A673 (cell line): ENCODE measurements at regions of chr7 and their contacts with region 1.

Region 1: DNA sequence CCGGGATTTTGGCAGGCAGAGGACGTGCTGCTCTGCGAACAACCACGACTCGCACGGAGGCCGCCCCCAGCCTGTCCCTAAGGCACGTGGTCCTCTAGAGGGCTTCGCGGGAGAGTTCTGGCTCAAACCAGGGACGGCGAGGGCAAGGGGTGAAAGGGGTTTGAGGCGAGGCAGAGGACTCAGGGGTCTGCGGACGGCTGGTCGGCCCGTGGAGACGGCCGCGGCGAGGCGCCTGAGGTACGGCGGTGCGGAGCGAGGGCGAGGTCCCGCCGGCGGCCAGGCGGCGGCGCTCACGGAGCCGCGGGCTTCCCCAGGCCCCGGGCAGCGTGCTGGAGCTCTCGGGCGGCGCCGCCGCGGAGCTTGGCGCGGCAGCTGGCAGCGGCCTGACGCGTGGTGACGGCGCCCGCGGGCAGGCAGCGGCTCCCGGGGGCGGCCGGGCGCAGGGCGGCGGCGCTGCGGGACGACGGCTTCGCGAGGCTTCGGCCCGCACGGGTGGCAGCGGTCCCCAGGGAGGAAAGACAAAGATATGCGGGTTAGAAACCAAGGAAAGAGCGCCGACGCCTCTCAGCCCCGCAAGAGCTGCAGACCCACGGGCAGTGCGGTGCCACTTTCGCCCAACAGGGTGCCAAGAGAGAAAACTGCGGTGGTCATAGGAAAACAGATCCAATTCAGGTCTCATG is 44.8 kb downstream of the ZNF800 start:
- DNase-seq: peak; percentile 86
- H3K4me3 ChIP-seq: peak overlapping the region; percentile 37
- H3K27ac ChIP-seq: no peak overlapping the region
- H3K4me1 ChIP-seq: no peaks in the 10 kb centered on the region
- H3K27me3 ChIP-seq: no peaks in the 10 kb centered on the region
- CTCF ChIP-seq: no peak; the same call in none of the 2 replicates

Region 2: GRCh38 chr7:126993626-126994213 is 354.0 kb before region 1 on chr7:
- CTCF ChIA-PET with region 1: no interaction called
- POLR2A ChIA-PET with region 1: no interaction called
- intact Hi-C with region 1: no loop called
- DNase-seq: no peak
- H3K4me3 ChIP-seq: no peak overlapping the region
- H3K27ac ChIP-seq: no peak overlapping the region
- H3K4me1 ChIP-seq: no peaks in the 10 kb centered on the region
- H3K27me3 ChIP-seq: no peaks in the 10 kb centered on the region
- CTCF ChIP-seq: no peak

Region 3: GRCh38 chr7:127029823-127030222 is 317.9 kb before region 1 on chr7:
- CTCF ChIA-PET with region 1: no interaction called
- POLR2A ChIA-PET with region 1: no interaction called
- intact Hi-C with region 1: no loop called
- DNase-seq: no peak
- H3K4me3 ChIP-seq: no peak overlapping the region
- H3K27ac ChIP-seq: no peak overlapping the region
- H3K4me1 ChIP-seq: no peaks in the 10 kb centered on the region
- H3K27me3 ChIP-seq: no peaks in the 10 kb centered on the region
- CTCF ChIP-seq: no peak

Region 4: GRCh38 chr7:127585044-127585953 is 237.6 kb after region 1 on chr7 and contains the start of gene GCC1:
- CTCF ChIA-PET with region 1: no interaction called
- POLR2A ChIA-PET with region 1: interaction called, 3 read pairs
- intact Hi-C with region 1: loop called (anchors 5 kb)
- DNase-seq: peak; percentile 91
- H3K4me3 ChIP-seq: peak within 1 kb of the TSS; percentile 90
- H3K27ac ChIP-seq: peak within 1 kb of the TSS; percentile 74
- H3K4me1 ChIP-seq: peaks cover 17% of the 10 kb centered on the region
- H3K27me3 ChIP-seq: no peaks in the 10 kb centered on the region
- CTCF ChIP-seq: no peak
- total RNA-seq, gene GCC1: 15.2 and 15.5 TPM in 2 replicates